ENCODE measurements at regions of chr6 and their contacts with region 1.

Region 1: GRCh38 chr6:70107852-70108629 is 194.8 kb downstream of the COL9A1 start:
- DNase-seq: no peak
- ATAC-seq: peak; percentile 32 to 68 (median 63)
- H3K4me3 ChIP-seq: no peak overlapping the region
- H3K27ac ChIP-seq: no peak overlapping the region
- H3K4me1 ChIP-seq: no peaks in the 10 kb centered on the region
- H3K27me3 ChIP-seq: no peaks in the 10 kb centered on the region
- CTCF ChIP-seq: peak; percentile 58 to 74 (median 67)
- POLR2A ChIP-seq: no peak

Region 2: GRCh38 chr6:69948479-69949114 is 159.4 kb before region 1 on chr6:
- intact Hi-C with region 1: no loop called
- DNase-seq: no peak
- ATAC-seq: no peak
- H3K4me3 ChIP-seq: no peak overlapping the region
- H3K27ac ChIP-seq: no peak overlapping the region
- H3K4me1 ChIP-seq: no peaks in the 10 kb centered on the region
- H3K27me3 ChIP-seq: no peaks in the 10 kb centered on the region
- CTCF ChIP-seq: no peak
- POLR2A ChIP-seq: no peak

Region 3: GRCh38 chr6:70166088-70166958 is 58.3 kb after region 1 on chr6:
- intact Hi-C with region 1: loop called in 1 of 2 experiments (anchors 10 kb)
- DNase-seq: peak; percentile 52 to 58 (median 58)
- ATAC-seq: peak; percentile 97 to 98 (median 98)
- H3K4me3 ChIP-seq: no peak overlapping the region
- H3K27ac ChIP-seq: no peak overlapping the region
- H3K4me1 ChIP-seq: peaks cover 0 to 3% (median 0%) of the 10 kb centered on the region in 4 donors
- H3K27me3 ChIP-seq: peaks cover 0 to 5% of the 10 kb centered on the region in 2 donors
- CTCF ChIP-seq: peak; percentile 38 to 76 (median 66)
- POLR2A ChIP-seq: no peak